ENCODE measurements at regions of chr1 and their contacts with region 1.

Region 1: GRCh38 chr1:32899586-32900296 is 1.4 kb downstream of the TMEM54 start:
- DNase-seq: no peak
- H3K4me3 Mint-ChIP-seq: no peak overlapping the region
- H3K27ac Mint-ChIP-seq: no peak overlapping the region
- H3K4me1 Mint-ChIP-seq: peaks cover 5% of the 10 kb centered on the region
- H3K27me3 Mint-ChIP-seq: peaks cover 59% of the 10 kb centered on the region

Region 2: DNA sequence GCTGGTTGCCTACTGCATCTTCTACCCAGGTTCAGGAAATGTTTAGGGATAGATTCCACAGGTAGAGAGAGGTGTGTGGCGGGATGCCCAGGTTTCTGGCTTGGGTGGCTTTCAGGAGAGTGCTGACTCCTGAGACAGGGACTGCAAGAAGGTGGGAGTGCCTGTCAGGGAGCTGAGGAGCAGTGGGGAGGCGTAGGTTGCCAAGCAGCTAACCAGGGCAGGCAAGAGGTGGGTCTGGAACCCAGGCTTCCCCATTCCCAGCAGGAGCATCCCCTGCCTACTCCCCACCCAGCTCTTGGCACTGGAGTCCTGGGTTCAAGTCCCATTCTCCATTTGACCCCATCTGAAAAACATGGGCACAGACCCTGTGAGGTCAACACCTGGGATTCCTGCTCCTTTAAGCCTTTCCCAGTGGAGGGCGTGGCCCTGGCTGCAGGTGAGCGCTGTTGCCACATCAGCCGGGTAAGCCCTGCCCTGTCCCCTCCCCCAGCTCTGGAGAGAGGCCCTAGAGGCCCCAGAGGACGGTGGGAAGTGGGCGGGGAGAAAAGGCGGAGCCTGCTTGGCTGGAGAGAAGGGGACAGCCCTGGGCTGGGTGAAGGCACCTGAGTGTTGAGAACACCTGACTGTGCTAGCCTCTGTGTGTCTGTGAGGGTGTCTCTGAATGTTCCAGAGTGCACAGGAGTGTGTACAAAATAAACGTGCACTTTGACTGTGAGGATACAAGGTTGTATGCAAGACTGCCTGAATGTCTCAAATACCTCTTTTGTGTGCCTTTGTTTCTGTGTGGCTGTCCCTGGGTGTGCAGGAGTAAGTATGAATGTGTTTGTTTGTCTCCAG is 183.2 kb before region 1 on chr1:
- CTCF ChIA-PET with region 1: no interaction called
- POLR2A ChIA-PET with region 1: no interaction called
- DNase-seq: peak; percentile 71
- H3K4me3 Mint-ChIP-seq: no peak overlapping the region
- H3K27ac Mint-ChIP-seq: no peak overlapping the region
- H3K4me1 Mint-ChIP-seq: peaks cover 13% of the 10 kb centered on the region
- H3K27me3 Mint-ChIP-seq: peaks cover 3% of the 10 kb centered on the region

Region 3: GRCh38 chr1:32886004-32886827 is 13.5 kb before region 1 on chr1 and contains the start of gene HPCA:
- CTCF ChIA-PET with region 1: interaction called, 11 read pairs
- POLR2A ChIA-PET with region 1: no interaction called
- DNase-seq: peak; percentile 45
- H3K4me3 Mint-ChIP-seq: no peak within 1 kb of the TSS
- H3K27ac Mint-ChIP-seq: no peak within 1 kb of the TSS
- H3K4me1 Mint-ChIP-seq: peaks cover 3% of the 10 kb centered on the region
- H3K27me3 Mint-ChIP-seq: peaks cover 59% of the 10 kb centered on the region
- total RNA-seq, gene HPCA: not detected

Region 4: DNA sequence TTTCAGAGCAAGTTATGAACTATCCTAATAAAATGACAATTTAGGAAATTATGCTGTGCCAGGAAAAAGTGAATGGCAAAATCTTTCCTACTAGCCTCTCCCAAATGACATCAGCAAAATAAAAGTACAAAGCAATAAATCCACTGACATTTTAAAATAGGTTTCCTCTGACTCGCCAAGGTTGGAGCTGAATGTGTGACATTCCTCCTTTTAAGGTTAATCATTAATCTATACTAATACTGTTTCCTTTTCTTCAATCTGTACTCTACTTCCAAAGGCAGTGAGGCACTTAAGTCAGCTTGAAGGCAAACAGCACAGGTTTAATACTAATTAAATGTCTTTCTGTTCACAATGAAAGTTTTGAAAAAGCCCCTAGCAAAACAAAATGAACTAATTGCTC is 49.2 kb after region 1 on chr1:
- CTCF ChIA-PET with region 1: no interaction called
- POLR2A ChIA-PET with region 1: no interaction called
- DNase-seq: no peak
- H3K4me3 Mint-ChIP-seq: no peak overlapping the region
- H3K27ac Mint-ChIP-seq: no peak overlapping the region
- H3K4me1 Mint-ChIP-seq: peaks cover 12% of the 10 kb centered on the region
- H3K27me3 Mint-ChIP-seq: no peaks in the 10 kb centered on the region